Activated CD4-positive, alpha-beta memory T cell treated with anti-CD3 and anti-CD28 coated beads for 36 hours (primary cell): ENCODE measurements at regions of chrX and their contacts with region 1.

Region 1: GRCh38 chrX:2707334-2707760 is 16.3 kb downstream of the CD99 start:
- DNase-seq: peak; percentile 88
- H3K4me3 Mint-ChIP-seq: peak overlapping the region; percentile 45
- H3K27ac Mint-ChIP-seq: peak overlapping the region; percentile 96
- H3K4me1 Mint-ChIP-seq: peaks cover 90% of the 10 kb centered on the region
- H3K27me3 Mint-ChIP-seq: no peaks in the 10 kb centered on the region

Region 2: GRCh38 chrX:1462596-1463251 is 1244.6 kb before region 1 on chrX:
- CTCF ChIA-PET with region 1: no interaction called
- POLR2A ChIA-PET with region 1: no interaction called
- intact Hi-C with region 1: loop called (anchors 5 kb)
- DNase-seq: peak; percentile 89
- H3K4me3 Mint-ChIP-seq: peak overlapping the region; percentile 61
- H3K27ac Mint-ChIP-seq: peak overlapping the region; percentile 96
- H3K4me1 Mint-ChIP-seq: peaks cover 60% of the 10 kb centered on the region
- H3K27me3 Mint-ChIP-seq: no peaks in the 10 kb centered on the region

Region 3: DNA sequence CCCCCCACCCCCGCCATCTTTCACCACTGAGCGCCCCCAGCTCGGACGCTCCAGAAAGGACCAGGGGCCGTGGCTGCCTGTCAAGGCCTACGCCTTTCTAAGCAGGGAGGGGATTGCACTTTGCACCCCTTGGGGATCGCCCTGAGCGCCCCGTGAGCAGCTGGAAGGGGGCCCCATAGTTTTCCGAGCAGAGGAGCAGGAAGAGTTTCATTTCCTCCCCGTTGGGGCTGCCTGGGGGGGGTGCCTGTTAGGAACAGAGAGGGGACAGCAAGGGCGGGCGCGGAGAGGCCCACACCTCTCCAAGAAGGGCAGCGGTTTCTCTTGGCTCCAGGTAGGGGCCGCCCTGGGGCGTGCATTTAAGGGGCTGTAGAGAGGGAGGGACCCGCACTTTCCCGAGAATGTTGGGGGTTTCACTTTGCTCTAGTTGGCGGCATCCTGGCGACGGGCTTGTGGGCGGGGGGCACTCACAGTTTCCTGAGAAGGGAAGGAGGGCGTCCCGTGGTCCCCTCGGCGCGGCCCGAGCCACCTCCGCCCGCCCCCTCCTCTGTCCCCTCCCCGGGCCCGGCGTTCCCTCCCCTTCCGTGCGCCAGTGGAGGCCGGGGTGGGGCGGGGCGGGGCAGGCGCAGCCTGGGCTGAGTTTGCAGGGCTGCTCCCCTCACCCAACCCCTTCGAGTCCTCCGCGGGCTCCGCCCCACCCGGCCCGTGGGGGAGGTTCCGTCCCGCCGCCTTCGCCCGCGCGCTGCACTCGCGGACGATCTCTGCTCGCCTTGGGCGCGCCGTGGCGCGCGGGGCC is 98.5 kb before region 1 on chrX:
- CTCF ChIA-PET with region 1: no interaction called
- POLR2A ChIA-PET with region 1: no interaction called
- intact Hi-C with region 1: loop called (anchors 1 kb)
- DNase-seq: peak; percentile 92
- H3K4me3 Mint-ChIP-seq: peak overlapping the region; percentile 82
- H3K27ac Mint-ChIP-seq: peak overlapping the region; percentile 87
- H3K4me1 Mint-ChIP-seq: peaks cover 45% of the 10 kb centered on the region
- H3K27me3 Mint-ChIP-seq: no peaks in the 10 kb centered on the region

Region 4: DNA sequence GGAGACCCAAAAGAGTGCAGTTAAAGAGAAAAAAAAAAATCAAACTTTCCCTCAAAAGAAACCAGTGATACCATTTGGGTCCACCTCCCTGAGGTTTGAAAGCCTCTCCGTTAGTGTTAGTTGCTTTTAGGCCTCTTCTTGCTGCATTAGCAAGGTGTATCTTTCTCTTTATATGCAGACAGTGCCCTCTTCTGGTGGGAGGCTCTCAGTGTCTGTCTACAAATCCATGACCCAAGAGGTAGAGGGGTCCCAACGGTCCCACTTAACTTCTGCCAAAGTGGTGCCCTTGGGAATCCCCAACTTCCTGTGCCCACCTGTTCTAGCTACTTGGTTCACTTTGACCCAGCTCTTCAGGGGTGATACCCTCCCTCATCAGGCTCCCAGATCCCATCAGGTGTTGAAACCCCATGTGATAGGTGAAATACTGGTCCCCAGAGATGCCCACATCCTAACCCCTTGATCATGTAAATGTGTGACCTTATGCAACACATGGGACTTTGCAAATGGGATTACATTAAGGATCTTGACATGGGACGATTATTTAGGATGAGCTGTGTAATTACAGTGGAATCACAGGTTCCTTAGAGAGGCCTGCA is 80.0 kb before region 1 on chrX:
- CTCF ChIA-PET with region 1: no interaction called
- POLR2A ChIA-PET with region 1: no interaction called
- intact Hi-C with region 1: loop called (anchors 1 kb)
- DNase-seq: peak; percentile 60
- H3K4me3 Mint-ChIP-seq: no peak overlapping the region
- H3K27ac Mint-ChIP-seq: peak overlapping the region; percentile 10
- H3K4me1 Mint-ChIP-seq: peaks cover 34% of the 10 kb centered on the region
- H3K27me3 Mint-ChIP-seq: no peaks in the 10 kb centered on the region

Region 5: DNA sequence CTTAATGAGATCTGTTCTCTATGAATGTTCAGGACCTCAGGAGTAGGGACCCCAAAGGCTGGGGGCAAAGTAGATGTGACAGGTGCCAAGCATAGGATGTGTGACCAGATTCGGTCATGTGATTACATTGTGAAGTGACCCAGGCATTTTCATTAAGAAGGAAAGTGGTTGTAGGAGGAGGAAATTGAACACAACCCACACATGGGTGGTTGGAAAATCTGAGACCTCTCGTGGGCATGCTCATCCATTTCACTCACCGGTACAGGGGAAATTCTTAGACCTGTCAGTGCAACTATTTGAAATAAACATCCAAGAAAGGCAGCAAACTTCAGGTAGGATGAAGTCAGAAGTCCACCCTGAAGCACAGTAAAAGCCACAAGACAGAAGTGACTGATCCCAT is 59.7 kb before region 1 on chrX:
- CTCF ChIA-PET with region 1: no interaction called
- POLR2A ChIA-PET with region 1: no interaction called
- intact Hi-C with region 1: loop called (anchors 1 kb)
- DNase-seq: peak; percentile 56
- H3K4me3 Mint-ChIP-seq: no peak overlapping the region
- H3K27ac Mint-ChIP-seq: peak overlapping the region; percentile 40
- H3K4me1 Mint-ChIP-seq: peaks cover 18% of the 10 kb centered on the region
- H3K27me3 Mint-ChIP-seq: no peaks in the 10 kb centered on the region

Region 6: DNA sequence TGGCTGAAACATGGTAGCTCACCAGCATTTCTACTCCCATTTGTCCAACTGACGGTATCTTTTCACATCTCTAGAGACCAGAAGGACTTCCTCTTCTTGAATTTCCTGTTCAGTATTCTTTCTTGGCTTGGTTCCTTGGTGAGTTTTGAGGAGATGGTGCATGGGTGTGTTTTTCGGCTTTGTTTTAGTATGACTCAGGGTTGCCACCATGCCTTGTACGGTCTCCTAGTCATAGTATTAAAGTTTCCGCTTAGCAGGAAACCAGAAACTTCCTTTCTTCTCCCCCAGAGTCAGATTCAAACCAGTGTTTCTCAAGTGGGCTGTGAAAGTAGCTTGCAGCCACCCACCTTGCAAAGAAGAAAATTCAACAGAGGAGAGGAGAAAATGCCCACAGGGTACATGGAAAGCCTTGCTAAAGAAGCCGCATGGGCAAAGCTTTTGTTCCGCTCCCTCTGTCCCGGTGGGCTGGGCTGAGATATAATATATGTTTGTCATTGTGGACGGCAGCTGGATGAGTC is 10.6 kb before region 1 on chrX:
- CTCF ChIA-PET with region 1: no interaction called
- POLR2A ChIA-PET with region 1: no interaction called
- intact Hi-C with region 1: loop called (anchors 1 kb)
- DNase-seq: peak; percentile 78
- H3K4me3 Mint-ChIP-seq: peak overlapping the region; percentile 86
- H3K27ac Mint-ChIP-seq: peak overlapping the region; percentile 96
- H3K4me1 Mint-ChIP-seq: peaks cover 81% of the 10 kb centered on the region
- H3K27me3 Mint-ChIP-seq: no peaks in the 10 kb centered on the region

Region 7: DNA sequence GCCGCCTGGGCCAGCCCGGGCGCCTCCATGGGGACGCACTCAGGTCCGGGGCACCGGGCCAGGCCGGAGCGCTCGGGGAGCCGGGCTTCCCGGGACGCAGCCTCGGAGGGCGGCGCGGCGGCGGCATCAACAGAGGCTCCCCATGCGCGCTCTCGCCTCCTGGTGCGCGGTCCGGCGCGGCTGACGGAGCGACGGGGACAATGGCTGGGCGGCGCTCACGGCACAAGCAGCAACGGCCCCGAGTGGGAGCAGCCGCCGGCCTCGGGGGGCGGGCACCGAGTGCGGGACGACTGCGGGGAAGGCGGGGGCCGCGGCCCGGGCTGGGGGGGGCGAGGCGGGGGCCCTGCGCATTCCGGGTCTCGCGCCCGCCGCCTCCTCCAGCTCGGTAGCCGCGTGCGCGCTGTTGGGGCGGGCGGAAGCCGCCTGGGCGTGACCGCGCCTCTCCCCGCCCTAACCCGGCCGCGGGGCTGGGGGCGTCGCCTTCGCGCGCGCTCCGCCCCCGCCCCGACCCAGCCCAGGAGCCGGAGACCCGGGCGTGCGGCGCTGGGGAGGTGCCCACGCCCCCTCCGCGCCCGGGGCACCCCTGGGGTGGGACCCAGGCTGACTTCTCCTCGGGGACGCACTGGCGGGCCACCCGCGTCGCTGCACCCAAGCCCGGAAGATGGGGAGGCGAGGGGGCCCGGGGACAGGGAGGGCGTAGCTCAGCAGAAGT is 1006.0 kb after region 1 on chrX and contains the start of gene PRKX:
- CTCF ChIA-PET with region 1: no interaction called
- POLR2A ChIA-PET with region 1: no interaction called
- intact Hi-C with region 1: loop called (anchors 5 kb)
- DNase-seq: peak; percentile 74
- H3K4me3 Mint-ChIP-seq: peak within 1 kb of the TSS; percentile 96
- H3K27ac Mint-ChIP-seq: peak within 1 kb of the TSS; percentile 95
- H3K4me1 Mint-ChIP-seq: peaks cover 11% of the 10 kb centered on the region
- H3K27me3 Mint-ChIP-seq: no peaks in the 10 kb centered on the region
- total RNA-seq, gene PRKX: 89.5 to 90.9 TPM